Adrenal gland (tissue), 19 donors: ENCODE measurements at regions of chr7 and their contacts with region 1.

Region 1: DNA sequence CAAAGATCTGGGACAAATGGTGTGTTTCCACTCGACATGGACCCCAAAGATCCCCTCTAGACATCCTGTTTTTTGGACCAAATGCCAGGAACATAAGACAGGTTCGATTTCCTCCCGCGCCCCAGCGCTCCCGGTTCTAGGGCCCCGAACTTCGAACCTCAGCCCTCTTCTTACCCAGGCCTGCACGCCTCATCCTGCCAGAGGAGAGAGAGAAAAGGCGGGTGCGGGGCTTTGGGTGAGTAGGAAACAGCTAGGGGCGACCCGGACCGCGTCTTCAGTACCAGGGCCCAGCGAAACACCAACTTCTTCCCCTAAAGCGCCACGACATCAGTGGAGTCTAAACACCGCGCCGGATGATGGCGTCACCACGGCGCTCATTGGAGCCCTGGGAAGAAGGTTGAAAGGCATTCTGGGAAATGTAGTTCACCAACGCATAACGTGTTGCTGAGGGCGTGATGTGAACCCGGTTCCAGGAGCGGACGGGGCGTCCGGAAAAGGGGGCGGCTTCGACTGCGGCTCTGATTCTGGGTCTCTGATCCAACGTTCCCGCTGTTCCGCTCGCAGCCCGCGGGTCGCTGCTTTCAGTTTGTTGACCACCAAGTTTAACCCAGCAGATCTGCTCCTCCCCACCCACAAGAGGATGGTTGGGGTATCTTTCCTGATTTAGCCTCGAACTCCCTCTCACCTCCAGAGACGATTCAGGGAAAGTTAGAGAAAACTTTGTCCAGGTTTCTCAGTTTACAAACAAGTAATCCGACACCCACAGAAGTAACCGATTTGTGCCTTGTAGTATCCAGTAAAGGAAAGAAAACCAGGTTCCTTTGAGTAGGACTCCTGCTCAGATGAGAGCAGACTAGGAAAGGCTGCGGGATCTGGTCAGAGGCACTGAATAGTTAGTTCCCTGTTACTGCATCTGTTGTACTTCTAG is at the start of gene BET1:
- DNase-seq: peak; percentile 92 to 98 (median 95)
- H3K4me3 ChIP-seq: peak within 1 kb of the TSS; percentile 63 to 88 (median 74)
- H3K27ac ChIP-seq: peak within 1 kb of the TSS; percentile 46 to 87 (median 84)
- H3K4me1 ChIP-seq: peaks cover 0 to 33% of the 10 kb centered on the region in 2 donors
- H3K27me3 ChIP-seq: no peaks in the 10 kb centered on the region
- CTCF ChIP-seq: no peak
- POLR2A ChIP-seq: peak; percentile 28 to 75
- total RNA-seq, gene BET1: 18.6 to 54.1 (median 38.6) TPM

Region 2: DNA sequence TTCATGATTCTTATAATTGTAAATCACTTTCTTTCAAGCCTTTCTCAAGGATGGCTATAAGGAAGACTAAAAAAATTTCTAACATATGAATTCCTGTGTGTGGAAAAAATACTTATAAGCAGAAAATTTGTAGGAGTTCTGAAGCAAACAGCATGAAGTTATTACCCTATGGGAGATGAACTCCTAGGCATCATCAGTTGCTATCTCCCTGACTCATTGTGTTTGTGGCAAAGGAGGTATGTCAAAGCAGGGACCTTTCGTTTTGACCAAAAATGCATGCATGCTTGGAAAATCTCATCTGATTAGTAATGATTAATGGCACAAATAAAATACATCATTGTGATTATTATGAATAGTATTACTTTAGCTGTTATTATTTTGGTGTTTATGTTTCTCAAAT is 489.1 kb before region 1 on chr7:
- intact Hi-C with region 1: no loop called
- DNase-seq: no peak
- H3K4me3 ChIP-seq: no peak overlapping the region
- H3K27ac ChIP-seq: no peak overlapping the region
- H3K4me1 ChIP-seq: no peaks in the 10 kb centered on the region
- H3K27me3 ChIP-seq: no peaks in the 10 kb centered on the region
- CTCF ChIP-seq: no peak
- POLR2A ChIP-seq: no peak

Region 3: DNA sequence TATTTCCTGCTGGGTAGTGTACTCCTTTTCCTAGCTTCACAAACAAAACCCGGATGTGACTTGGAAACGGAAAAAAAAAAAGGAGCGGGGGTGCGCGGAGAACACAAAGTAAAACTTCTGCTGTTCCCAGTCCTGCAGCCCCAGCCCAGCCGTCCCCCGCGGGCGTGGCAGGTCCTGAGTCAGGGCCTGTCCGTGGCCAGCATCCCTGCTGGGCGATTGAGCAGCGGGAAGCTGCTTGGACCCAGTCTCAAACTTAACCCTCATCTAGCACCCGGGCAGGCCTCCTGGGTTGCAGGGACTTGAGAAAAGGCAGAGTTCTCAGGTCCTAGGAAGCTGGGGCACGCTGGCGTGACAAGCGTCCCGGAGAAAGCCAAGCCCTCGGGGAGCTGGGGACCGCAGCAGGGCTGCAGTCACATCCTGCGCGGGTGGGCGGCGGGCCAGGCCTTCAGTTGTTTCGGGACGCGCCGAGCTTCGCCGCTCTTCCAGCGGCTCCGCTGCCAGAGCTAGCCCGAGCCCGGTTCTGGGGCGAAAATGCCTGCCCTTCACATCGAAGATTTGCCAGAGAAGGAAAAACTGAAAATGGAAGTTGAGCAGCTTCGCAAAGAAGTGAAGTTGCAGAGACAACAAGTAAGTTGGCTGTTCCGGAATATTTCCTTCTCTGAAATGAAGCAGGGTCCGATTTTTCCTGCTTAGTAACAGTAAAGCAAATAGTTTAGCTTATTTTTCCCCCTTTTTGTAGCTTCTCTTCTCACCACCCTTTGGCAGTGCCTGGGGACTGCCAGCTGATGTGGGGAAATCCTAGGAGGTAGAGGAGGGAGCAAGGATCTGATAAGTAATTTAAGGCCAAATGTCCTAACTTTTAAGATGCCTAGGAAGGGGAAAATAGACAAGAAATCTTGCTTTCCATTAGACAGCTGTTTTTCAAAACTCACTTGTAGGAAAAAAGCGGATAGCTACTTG is 82.4 kb before region 1 on chr7 and contains the start of gene GNG11:
- intact Hi-C with region 1: loop called in 1 of 2 experiments (anchors 10 kb)
- DNase-seq: peak; percentile 71 to 85 (median 80)
- H3K4me3 ChIP-seq: peak within 1 kb of the TSS in 3 of 4 donors; percentile 5 to 76 (median 68)
- H3K27ac ChIP-seq: peak within 1 kb of the TSS in 4 of 5 donors; percentile 39 to 88 (median 79)
- H3K4me1 ChIP-seq: peaks cover 0 to 8% of the 10 kb centered on the region in 2 donors
- H3K27me3 ChIP-seq: no peaks in the 10 kb centered on the region
- CTCF ChIP-seq: no peak
- POLR2A ChIP-seq: peak in 1 of 2 donors; percentile 54
- total RNA-seq, gene GNG11: 8.3 to 23.8 (median 15.8) TPM